PC-9 (cell line): ENCODE measurements at regions of chr13 and their contacts with region 1.

Region 1: DNA sequence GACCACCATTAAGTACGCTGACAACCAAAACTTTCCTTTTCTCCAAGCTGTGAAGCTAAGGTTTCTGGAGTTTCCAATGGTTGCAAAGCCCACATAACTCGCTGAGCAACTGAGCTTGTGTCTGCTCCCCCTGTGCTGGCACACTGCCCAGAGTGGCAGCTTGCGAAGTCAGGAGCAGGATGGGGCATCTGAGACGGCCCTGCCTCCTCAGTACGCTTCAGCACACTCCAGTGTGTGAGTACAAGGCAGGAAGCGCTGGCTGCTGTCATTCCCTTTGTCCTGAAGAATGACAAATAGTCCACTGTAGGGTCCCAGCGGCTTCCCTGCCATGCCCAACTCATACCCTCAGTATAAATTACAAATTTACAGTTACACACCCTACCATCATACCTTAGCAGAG is 51.5 kb downstream of the SKA3 start:
- DNase-seq: peak; percentile 78 to 79
- H3K4me3 ChIP-seq: no peak overlapping the region
- H3K27ac ChIP-seq: no peak overlapping the region
- H3K4me1 ChIP-seq: 0 out of 2 replicates have a peak, but pooled peaks cover 6% of the 10 kb centered on the region
- H3K27me3 ChIP-seq: no peaks in the 10 kb centered on the region
- CTCF ChIP-seq: no peak

Region 2: DNA sequence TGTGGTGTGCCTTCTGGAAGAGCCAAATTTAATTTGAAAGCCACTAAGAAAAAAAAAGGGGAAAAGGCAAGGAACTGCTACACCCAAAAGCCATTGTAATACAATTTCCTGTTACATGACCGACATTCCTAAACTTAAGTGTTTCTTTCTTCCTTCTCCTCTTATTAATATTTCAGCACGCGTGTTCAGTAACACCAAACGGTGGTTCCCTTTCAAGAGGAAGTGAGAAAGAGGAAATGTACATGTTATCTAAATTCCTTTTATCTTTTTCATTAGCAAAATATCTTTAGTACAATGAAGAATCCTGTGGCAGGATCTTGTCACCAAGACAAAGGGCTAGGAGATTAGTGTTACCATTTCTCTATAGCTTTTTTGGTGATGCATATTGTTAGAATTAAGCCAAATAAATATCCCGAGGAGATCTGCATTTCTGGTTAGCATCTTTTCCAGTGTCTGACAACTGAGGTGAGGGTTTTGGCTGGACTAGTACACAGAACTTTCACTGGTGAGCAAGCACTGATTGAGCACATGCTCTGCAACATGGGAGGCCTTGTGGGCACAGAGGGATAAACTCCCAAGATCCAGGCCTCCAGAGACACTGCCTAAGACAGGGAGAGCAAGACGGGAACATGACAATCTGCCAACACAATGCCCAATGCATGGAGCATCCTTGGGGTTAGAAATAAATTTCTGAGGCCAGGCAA is 85.6 kb before region 1 on chr13:
- CTCF ChIA-PET with region 1: no interaction called
- POLR2A ChIA-PET with region 1: interaction called, 22 read pairs
- intact Hi-C with region 1: no loop called
- DNase-seq: no peak
- H3K4me3 ChIP-seq: no peak overlapping the region
- H3K27ac ChIP-seq: no peak overlapping the region
- H3K4me1 ChIP-seq: no peaks in the 10 kb centered on the region
- H3K27me3 ChIP-seq: no peaks in the 10 kb centered on the region
- CTCF ChIP-seq: no peak

Region 3: DNA sequence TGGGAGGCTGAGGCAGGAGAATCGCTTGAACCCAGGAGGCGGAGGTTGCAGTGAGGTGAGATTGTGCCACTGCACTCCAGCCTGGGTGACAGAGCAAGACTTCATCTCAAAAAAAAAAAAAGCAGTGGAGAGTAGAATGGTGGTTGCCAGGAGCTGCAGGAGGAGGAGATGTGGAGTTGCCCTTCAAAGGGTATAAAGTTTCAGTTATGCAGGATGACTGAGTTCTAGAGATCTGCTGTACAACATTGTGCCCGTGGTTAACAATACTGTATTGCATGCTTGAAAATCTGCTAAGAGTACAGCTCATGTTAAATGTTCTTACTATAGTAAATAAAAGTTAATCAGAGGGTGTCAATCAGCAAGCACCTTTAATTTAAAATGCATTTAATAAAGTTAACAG is 35.0 kb before region 1 on chr13:
- CTCF ChIA-PET with region 1: no interaction called
- POLR2A ChIA-PET with region 1: no interaction called
- intact Hi-C with region 1: no loop called
- DNase-seq: no peak
- H3K4me3 ChIP-seq: no peak overlapping the region
- H3K27ac ChIP-seq: no peak overlapping the region
- H3K4me1 ChIP-seq: no peaks in the 10 kb centered on the region
- H3K27me3 ChIP-seq: no peaks in the 10 kb centered on the region
- CTCF ChIP-seq: no peak